Heart left ventricle (tissue), 16 donors: ENCODE measurements at regions of chr11 and their contacts with region 1.

Region 1: DNA sequence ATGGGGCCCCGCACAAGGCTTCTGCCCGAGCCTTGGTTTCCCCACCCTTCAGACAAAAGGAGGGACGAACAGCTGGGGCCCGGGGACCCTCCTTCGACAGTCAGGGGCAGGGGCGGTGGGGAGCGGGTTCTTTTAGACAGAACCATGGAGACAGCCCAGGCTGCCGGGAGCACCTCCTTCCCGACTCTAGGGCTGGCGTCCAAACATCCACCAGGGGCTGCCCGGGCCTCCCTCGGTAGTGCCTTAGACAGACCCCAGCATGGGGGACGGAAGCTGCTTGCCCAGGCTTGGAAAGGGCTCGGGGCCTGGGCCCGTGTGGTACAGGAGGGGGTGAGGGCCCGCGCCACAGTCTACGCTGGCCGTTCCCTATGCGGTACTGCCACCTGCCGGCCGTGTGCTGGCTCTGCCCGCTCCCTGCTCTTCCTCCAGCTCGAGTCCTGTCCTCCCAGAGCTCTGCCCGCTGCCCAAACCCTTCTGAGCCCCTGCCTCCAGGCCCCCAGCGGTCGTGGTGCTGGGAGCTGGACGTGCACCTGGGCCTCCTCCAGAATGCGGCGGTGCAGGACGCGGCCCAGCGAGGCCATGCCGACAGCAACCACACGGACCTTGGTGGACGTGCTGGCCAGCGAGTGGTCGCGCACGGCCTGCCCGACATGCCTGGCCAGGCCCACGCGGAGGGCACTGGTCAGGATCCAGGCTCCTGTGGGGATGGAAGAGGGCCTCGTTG is 20.1 kb downstream of the TSSC4 start:
- DNase-seq: peak; percentile 66 to 89 (median 74)
- ATAC-seq: peak; percentile 85 to 95 (median 92)
- H3K4me3 ChIP-seq: peak overlapping the region in 2 of 12 donors; percentile 16 to 18
- H3K27ac ChIP-seq: peak overlapping the region in 1 of 12 donors; percentile 24
- H3K4me1 ChIP-seq: peaks cover 0 to 13% (median 0%) of the 10 kb centered on the region in 12 donors
- H3K27me3 ChIP-seq: peaks cover 0 to 13% (median 0%) of the 10 kb centered on the region in 9 donors
- CTCF ChIP-seq: peak; percentile 89 to 97 (median 93)
- POLR2A ChIP-seq: no peak

Region 2: GRCh38 chr11:2166091-2166851 is 254.4 kb before region 1 on chr11:
- intact Hi-C with region 1: loop called in 2 of 10 experiments (anchors 1 kb)
- DNase-seq: no peak
- ATAC-seq: peak in 3 of 4 donors; percentile 5 to 43 (median 23)
- H3K4me3 ChIP-seq: peak overlapping the region in 9 of 12 donors; percentile 11 to 40 (median 28)
- H3K27ac ChIP-seq: no peak overlapping the region
- H3K4me1 ChIP-seq: peaks cover 0 to 13% (median 6%) of the 10 kb centered on the region in 12 donors
- H3K27me3 ChIP-seq: peaks cover 0 to 36% (median 21%) of the 10 kb centered on the region in 9 donors
- CTCF ChIP-seq: peak; percentile 41 to 69 (median 52)
- POLR2A ChIP-seq: no peak

Region 3: DNA sequence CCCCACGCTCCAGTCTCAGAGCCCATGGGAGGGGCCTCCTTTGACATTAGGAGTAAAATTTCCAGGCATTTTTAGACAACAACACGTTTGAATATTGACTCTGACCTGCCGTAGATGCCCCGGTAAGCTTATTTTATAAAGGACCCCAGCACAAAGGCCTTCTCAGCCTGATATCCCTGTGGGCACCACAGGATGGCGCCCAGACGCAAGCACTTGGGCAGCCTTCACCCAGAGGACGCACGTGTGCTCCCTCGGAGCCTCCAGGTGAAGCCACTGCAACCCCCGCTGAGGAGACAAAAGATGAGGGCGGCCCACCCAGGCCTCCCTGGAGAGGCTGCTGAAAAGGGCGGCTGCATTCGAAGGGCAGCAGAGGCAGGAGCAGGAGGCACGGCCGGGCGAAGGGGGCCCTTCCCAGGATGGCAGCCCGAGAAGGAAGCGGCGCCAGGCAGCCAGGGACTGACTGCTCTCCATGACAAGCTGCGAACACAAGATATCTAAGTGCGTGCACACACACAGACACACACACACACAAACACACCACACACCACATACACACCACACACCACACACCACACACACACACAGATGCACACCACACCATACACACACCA is 233.9 kb before region 1 on chr11:
- intact Hi-C with region 1: loop called in 1 of 10 experiments (anchors 2 kb)
- DNase-seq: no peak
- ATAC-seq: peak in 3 of 4 donors; percentile 52 to 72 (median 59)
- H3K4me3 ChIP-seq: no peak overlapping the region
- H3K27ac ChIP-seq: no peak overlapping the region
- H3K4me1 ChIP-seq: peaks cover 0 to 18% (median 0%) of the 10 kb centered on the region in 12 donors
- H3K27me3 ChIP-seq: peaks cover 0 to 32% (median 6%) of the 10 kb centered on the region in 9 donors
- CTCF ChIP-seq: peak; percentile 41 to 62 (median 53)
- POLR2A ChIP-seq: no peak